IMR-90 (cell line): ENCODE measurements at regions of chr12 and their contacts with region 1.

Region 1: GRCh38 chr12:77065361-77066204 is at the start of gene E2F7:
- DNase-seq: peak; percentile 87
- ATAC-seq: peak; percentile 96
- H3K4me3 ChIP-seq: peak within 1 kb of the TSS; percentile 67
- H3K27ac ChIP-seq: peak within 1 kb of the TSS; percentile 57
- H3K4me1 ChIP-seq: peaks cover 5% of the 10 kb centered on the region; the same call in 1 of the 2 replicates
- H3K27me3 ChIP-seq: no peaks in the 10 kb centered on the region
- CTCF ChIP-seq: 0 out of 2 replicates have a peak, but pooled peaks have one; percentile 5
- POLR2A ChIP-seq: peak; percentile 75
- RAD21 ChIP-seq: no peak
- total RNA-seq, gene E2F7: 8.1 and 10.3 TPM in 2 replicates

Region 2: DNA sequence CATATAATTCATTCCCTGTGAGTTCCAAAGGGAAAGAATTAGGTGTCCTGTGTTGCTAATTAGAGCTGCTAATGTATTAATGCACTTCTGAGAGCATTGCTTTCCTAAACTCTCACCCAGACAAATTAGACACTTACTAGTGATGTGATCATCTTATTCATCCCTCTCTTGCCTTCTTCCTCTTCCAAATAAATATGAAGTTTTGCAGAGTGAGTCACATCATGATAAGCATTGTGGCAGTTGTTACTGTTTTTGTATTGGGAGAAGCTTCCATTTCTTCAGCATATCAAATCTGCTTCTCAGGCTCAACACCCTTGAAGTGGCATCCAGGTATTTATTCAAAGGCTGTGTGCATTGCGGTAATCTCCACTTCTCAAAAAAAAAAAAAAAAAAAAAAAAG is 37.1 kb after region 1 on chr12:
- CTCF ChIA-PET with region 1: no interaction called
- POLR2A ChIA-PET with region 1: no interaction called
- dilution Hi-C with region 1: no loop called
- in situ Hi-C with region 1: no loop called
- intact Hi-C with region 1: loop called (anchors 5 kb)
- DNase-seq: peak; percentile 79
- ATAC-seq: peak; percentile 87
- H3K4me3 ChIP-seq: no peak overlapping the region
- H3K27ac ChIP-seq: no peak overlapping the region
- H3K4me1 ChIP-seq: peaks cover 5% of the 10 kb centered on the region; the same call in 1 of the 2 replicates
- H3K27me3 ChIP-seq: no peaks in the 10 kb centered on the region
- CTCF ChIP-seq: no peak
- POLR2A ChIP-seq: no peak
- RAD21 ChIP-seq: no peak

Region 3: DNA sequence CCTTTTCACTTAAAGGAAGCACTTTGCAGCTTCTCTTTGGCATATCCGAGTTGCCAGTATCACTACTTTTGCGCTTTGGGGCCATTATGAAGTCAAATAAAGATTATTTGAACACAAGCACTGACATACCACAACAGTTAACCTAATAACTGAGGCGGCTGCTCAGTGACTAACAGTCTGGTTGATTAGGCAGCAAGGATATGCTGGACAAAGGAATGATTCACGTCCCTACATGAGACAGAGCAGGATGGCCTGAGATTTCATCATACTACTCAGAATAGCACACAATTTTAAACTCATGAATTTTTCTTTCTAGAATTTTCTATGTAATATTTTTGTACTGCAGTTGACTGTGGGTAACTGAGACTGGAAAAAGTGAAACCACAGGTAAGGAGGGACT is 56.7 kb after region 1 on chr12:
- CTCF ChIA-PET with region 1: no interaction called
- POLR2A ChIA-PET with region 1: no interaction called
- dilution Hi-C with region 1: no loop called
- in situ Hi-C with region 1: no loop called
- intact Hi-C with region 1: loop called (anchors 2 kb)
- DNase-seq: peak; percentile 97
- ATAC-seq: peak; percentile 89
- H3K4me3 ChIP-seq: no peak overlapping the region
- H3K27ac ChIP-seq: peak overlapping the region; percentile 34; the same call in 1 of the 2 replicates
- H3K4me1 ChIP-seq: peaks cover 9% of the 10 kb centered on the region
- H3K27me3 ChIP-seq: no peaks in the 10 kb centered on the region
- CTCF ChIP-seq: no peak
- POLR2A ChIP-seq: peak; percentile 27; the same call in 1 of the 2 replicates
- RAD21 ChIP-seq: peak; percentile 21; the same call in 1 of the 2 replicates

Region 4: DNA sequence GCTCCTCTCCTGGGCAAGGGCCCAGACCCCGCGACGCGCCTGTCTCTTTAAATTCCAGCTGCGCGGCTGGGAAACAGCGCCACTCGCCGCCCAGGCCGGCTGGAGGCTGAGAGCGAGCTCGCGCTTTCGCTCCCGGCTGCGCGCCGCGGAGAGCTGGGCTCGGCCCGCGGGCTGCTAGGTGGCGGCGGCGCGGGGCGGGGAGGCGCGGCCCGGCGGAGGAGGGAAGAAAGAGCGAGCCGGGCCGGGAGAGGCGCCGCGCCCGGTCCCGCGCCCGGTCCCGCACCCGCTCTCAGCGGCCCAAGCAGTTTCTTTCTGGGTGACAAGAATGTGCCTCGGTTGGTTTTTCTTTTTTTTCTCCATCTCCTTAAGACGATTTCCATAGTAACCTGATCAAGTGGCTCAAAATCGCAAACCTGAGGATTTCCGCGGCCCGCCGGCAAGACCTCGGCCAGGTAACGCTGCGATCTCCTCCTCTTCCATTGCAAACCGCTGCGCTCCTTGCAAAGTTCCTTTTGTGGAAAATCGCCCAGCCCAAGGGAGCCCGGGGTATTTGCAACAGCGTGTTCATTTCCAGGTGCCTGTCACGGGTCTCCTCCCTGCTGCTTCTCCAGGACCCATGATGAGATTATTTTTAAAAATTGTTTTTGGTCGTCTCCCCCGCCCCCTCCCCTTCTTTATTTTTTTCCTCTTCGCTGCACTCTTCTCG is 259.3 kb after region 1 on chr12:
- CTCF ChIA-PET with region 1: no interaction called
- POLR2A ChIA-PET with region 1: no interaction called
- dilution Hi-C with region 1: no loop called
- in situ Hi-C with region 1: no loop called
- intact Hi-C with region 1: loop called (anchors 5 kb)
- DNase-seq: peak; percentile 61
- ATAC-seq: peak; percentile 99
- H3K4me3 ChIP-seq: peak overlapping the region; percentile 55
- H3K27ac ChIP-seq: no peak overlapping the region
- H3K4me1 ChIP-seq: no peaks in the 10 kb centered on the region
- H3K27me3 ChIP-seq: peaks cover 24% of the 10 kb centered on the region
- CTCF ChIP-seq: peak; percentile 65
- POLR2A ChIP-seq: no peak
- RAD21 ChIP-seq: peak; percentile 61

Region 5: DNA sequence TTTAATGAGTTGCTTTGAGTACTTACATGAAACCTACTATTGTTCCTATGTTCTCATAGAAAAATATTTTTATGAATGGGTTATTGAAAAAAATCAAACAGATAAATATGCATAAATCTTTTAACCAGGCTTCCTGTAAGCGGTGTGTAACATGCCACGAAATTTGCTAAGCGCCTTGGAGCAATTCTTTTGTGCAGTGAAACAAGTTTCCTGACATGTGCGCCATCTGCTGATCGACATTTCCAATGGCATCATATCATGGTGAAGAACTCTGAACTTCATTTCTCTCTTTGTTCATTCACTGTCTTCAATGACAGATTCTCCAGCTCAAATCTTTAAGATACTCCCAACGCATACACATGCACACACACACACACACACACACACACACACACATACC is 619.5 kb after region 1 on chr12:
- CTCF ChIA-PET with region 1: no interaction called
- POLR2A ChIA-PET with region 1: no interaction called
- dilution Hi-C with region 1: no loop called
- in situ Hi-C with region 1: loop called (anchors 10 kb)
- intact Hi-C with region 1: no loop called
- DNase-seq: peak; percentile 80
- ATAC-seq: peak; percentile 87
- H3K4me3 ChIP-seq: no peak overlapping the region
- H3K27ac ChIP-seq: no peak overlapping the region
- H3K4me1 ChIP-seq: no peaks in the 10 kb centered on the region
- H3K27me3 ChIP-seq: no peaks in the 10 kb centered on the region
- CTCF ChIP-seq: peak; percentile 78
- POLR2A ChIP-seq: no peak
- RAD21 ChIP-seq: peak; percentile 82

Region 6: GRCh38 chr12:77925536-77926108 is 860.0 kb after region 1 on chr12:
- CTCF ChIA-PET with region 1: no interaction called
- POLR2A ChIA-PET with region 1: no interaction called
- dilution Hi-C with region 1: no loop called
- in situ Hi-C with region 1: loop called (anchors 25 kb)
- intact Hi-C with region 1: no loop called
- DNase-seq: peak; percentile 92
- ATAC-seq: peak; percentile 99
- H3K4me3 ChIP-seq: no peak overlapping the region
- H3K27ac ChIP-seq: no peak overlapping the region
- H3K4me1 ChIP-seq: no peaks in the 10 kb centered on the region
- H3K27me3 ChIP-seq: no peaks in the 10 kb centered on the region; the same call in 1 of the 2 replicates
- CTCF ChIP-seq: peak; percentile 95
- POLR2A ChIP-seq: no peak
- RAD21 ChIP-seq: peak; percentile 81

Region 7: GRCh38 chr12:77940011-77940423 is 874.4 kb after region 1 on chr12:
- CTCF ChIA-PET with region 1: no interaction called
- POLR2A ChIA-PET with region 1: no interaction called
- dilution Hi-C with region 1: no loop called
- in situ Hi-C with region 1: loop called (anchors 25 kb)
- intact Hi-C with region 1: loop called (anchors 10 kb)
- DNase-seq: peak; percentile 93
- ATAC-seq: peak; percentile 77
- H3K4me3 ChIP-seq: peak overlapping the region; percentile 59; the same call in 1 of the 2 replicates
- H3K27ac ChIP-seq: peak overlapping the region; percentile 99
- H3K4me1 ChIP-seq: peaks cover 1% of the 10 kb centered on the region; the same call in 1 of the 2 replicates
- H3K27me3 ChIP-seq: no peaks in the 10 kb centered on the region
- CTCF ChIP-seq: no peak
- POLR2A ChIP-seq: peak; percentile 51; the same call in 1 of the 2 replicates
- RAD21 ChIP-seq: no peak